CD4-positive, alpha-beta memory T cell (primary cell): ENCODE measurements at regions of chr2 and their contacts with region 1.

Region 1: GRCh38 chr2:218659258-218659987 is at the starts of genes BCS1L and ZNF142:
- DNase-seq: peak; percentile 90 to 94 (median 92)
- H3K4me3 ChIP-seq: peak within 1 kb of the TSS; percentile 50 to 78
- H3K4me3 Mint-ChIP-seq: peak within 1 kb of the TSS; percentile 91 to 100 (median 93)
- H3K27ac ChIP-seq: peak within 1 kb of the TSS; percentile 71
- H3K27ac Mint-ChIP-seq: peak within 1 kb of the TSS; percentile 92 to 98 (median 94)
- H3K4me1 ChIP-seq: peaks cover 28% of the 10 kb centered on the region
- H3K4me1 Mint-ChIP-seq: peaks cover 17 to 37% (median 31%) of the 10 kb centered on the region in 4 donors
- H3K27me3 ChIP-seq: no peaks in the 10 kb centered on the region
- H3K27me3 Mint-ChIP-seq: no peaks in the 10 kb centered on the region
- total RNA-seq, gene BCS1L: 53.0 to 57.2 TPM
- total RNA-seq, gene ZNF142: 44.4 to 54.5 TPM

Region 2: DNA sequence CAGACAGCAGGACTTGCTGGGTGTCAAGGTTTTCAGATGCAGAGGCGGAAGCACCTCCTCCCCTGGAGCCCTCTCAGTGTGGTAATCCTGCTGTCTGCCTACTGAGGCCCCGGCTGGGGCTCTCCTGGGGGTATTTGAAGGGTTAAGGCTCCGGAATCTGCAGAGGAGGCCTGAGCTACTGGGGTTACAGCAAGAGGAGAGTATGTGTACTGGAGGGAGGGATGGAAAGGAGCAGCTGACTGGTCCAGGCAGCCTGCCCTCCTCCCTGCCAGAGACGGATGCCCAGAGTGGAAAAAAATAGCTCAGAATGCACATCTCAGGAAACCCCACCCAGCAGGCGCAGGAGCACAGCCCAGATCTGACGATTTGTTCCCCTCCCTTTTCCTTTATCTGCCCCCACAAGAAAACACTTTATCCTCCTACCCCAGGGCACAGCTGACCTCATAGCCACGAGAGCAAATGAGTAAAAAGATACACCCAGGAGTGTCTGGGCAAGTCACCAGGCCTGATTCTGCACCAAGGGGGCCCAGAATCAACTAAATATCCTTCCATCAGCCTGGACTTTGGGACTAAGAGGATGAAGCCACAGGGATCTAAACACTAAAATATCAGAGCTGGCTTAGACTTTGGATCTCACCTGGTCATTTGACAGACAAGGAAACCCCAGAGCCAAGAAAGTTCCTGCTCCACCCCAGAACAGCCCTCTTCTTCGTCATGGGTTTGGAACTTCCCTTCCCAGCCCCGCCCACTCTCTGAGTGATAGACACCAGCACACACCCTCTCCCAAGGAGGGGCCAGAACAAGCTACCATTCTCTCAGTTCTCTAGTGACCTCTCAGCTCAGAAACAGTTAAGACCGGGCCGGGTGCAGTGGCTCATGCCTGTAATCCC is 372.6 kb before region 1 on chr2:
- CTCF ChIA-PET with region 1: no interaction called
- POLR2A ChIA-PET with region 1: interaction called, 11 read pairs
- intact Hi-C with region 1: no loop called
- DNase-seq: peak; percentile 84 to 97 (median 87)
- H3K4me3 ChIP-seq: peak overlapping the region; percentile 53 to 86
- H3K4me3 Mint-ChIP-seq: peak overlapping the region; percentile 90 to 97 (median 91)
- H3K27ac ChIP-seq: peak overlapping the region; percentile 94
- H3K27ac Mint-ChIP-seq: peak overlapping the region; percentile 98 to 100 (median 99)
- H3K4me1 ChIP-seq: peaks cover 92% of the 10 kb centered on the region
- H3K4me1 Mint-ChIP-seq: peaks cover 55 to 95% (median 73%) of the 10 kb centered on the region in 4 donors
- H3K27me3 ChIP-seq: no peaks in the 10 kb centered on the region
- H3K27me3 Mint-ChIP-seq: no peaks in the 10 kb centered on the region

Region 3: DNA sequence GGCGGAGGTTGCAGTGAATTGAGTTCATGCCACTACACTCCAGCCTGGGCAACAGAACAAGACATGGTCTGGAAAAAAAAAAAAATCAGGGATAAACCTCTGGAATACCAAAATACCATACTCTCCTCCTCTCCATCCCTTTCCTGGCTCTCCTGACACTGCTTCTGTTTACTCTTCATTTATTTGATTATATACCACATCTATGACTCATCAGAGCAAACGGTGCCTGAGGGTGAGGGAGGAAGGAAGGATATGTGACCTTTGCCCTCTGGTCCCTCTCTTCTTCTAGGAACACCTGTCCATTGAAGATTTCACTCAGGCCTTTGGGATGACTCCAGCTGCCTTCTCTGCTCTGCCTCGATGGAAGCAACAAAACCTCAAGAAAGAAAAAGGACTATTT is 210.5 kb before region 1 on chr2:
- CTCF ChIA-PET with region 1: no interaction called
- POLR2A ChIA-PET with region 1: no interaction called
- intact Hi-C with region 1: no loop called
- DNase-seq: no peak
- H3K4me3 ChIP-seq: no peak overlapping the region
- H3K4me3 Mint-ChIP-seq: no peak overlapping the region
- H3K27ac ChIP-seq: no peak overlapping the region
- H3K27ac Mint-ChIP-seq: peak overlapping the region in 1 of 7 donors; percentile 57
- H3K4me1 ChIP-seq: no peaks in the 10 kb centered on the region
- H3K4me1 Mint-ChIP-seq: peaks cover 0 to 3% (median under 1%) of the 10 kb centered on the region in 4 donors
- H3K27me3 ChIP-seq: no peaks in the 10 kb centered on the region
- H3K27me3 Mint-ChIP-seq: no peaks in the 10 kb centered on the region

Region 4: DNA sequence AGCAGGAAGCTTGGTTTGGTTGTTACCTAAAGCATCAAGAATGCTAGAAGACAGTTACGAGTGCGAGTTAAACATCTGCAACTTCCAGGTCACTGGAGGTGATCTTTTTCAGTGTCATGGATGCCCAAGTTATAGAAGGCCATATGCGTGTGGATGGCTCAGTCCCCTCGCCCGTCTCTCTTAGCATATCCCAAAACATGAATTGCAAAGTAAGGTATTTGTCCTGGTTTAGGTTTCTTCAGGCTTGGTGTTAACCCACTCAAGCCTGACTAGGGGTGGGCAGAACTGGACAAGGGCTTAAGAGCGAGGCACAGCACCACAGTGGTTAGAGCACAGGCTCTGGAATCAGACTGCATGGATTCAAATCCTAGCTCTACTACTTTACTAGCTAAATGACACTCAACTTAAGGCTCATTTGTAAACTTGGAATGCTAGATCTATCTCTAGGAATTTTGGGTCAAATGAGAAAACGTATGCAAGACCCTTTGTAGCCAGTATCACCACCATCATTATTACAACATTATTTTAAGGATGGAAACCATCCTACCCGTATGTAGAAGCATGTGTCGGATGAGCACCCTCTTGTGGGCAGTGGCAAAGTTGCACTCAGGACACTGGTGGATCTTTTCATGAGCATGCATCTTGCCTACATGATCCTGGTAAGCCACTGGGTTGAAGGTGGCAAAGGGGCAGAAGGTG is 11.2 kb before region 1 on chr2:
- CTCF ChIA-PET with region 1: interaction called, 49 read pairs
- POLR2A ChIA-PET with region 1: interaction called, 16 read pairs
- intact Hi-C with region 1: loop called (anchors 1 kb)
- DNase-seq: peak in 4 of 5 donors; percentile 42 to 52 (median 48)
- H3K4me3 ChIP-seq: no peak overlapping the region
- H3K4me3 Mint-ChIP-seq: no peak overlapping the region
- H3K27ac ChIP-seq: no peak overlapping the region
- H3K27ac Mint-ChIP-seq: peak overlapping the region in 2 of 7 donors; percentile 54 to 67
- H3K4me1 ChIP-seq: peaks cover 6% of the 10 kb centered on the region
- H3K4me1 Mint-ChIP-seq: peaks cover 6 to 13% (median 11%) of the 10 kb centered on the region in 4 donors
- H3K27me3 ChIP-seq: no peaks in the 10 kb centered on the region
- H3K27me3 Mint-ChIP-seq: no peaks in the 10 kb centered on the region

Region 5: DNA sequence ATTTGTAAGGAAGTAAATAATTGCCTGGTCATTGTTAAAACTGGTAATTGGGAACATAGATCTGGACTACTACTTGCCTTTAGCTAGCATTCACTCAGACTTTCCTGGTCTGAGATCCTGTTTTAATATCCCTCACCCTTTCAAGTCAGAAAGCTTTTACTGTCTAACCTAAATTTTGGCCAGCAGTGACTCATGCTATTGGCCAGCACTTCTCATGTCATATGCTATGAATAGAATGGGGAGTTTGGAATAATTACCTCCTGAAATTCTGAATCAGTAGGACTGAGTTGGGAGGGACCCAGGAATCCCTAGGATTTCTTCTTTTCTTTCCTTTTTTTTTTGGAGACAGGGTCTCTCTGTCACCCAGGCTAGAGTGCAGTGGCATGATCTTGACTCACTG is 31.8 kb after region 1 on chr2:
- CTCF ChIA-PET with region 1: interaction called, 23 read pairs
- POLR2A ChIA-PET with region 1: no interaction called
- intact Hi-C with region 1: loop called (anchors 1 kb)
- DNase-seq: no peak
- H3K4me3 ChIP-seq: no peak overlapping the region
- H3K4me3 Mint-ChIP-seq: no peak overlapping the region
- H3K27ac ChIP-seq: no peak overlapping the region
- H3K27ac Mint-ChIP-seq: no peak overlapping the region
- H3K4me1 ChIP-seq: no peaks in the 10 kb centered on the region
- H3K4me1 Mint-ChIP-seq: peaks cover 0 to 4% (median 2%) of the 10 kb centered on the region in 4 donors
- H3K27me3 ChIP-seq: no peaks in the 10 kb centered on the region
- H3K27me3 Mint-ChIP-seq: no peaks in the 10 kb centered on the region

Region 6: GRCh38 chr2:218898109-218898878 is 238.9 kb after region 1 on chr2:
- CTCF ChIA-PET with region 1: interaction called, 9 read pairs
- POLR2A ChIA-PET with region 1: interaction called, 6 read pairs
- intact Hi-C with region 1: loop called (anchors 5 kb)
- DNase-seq: peak; percentile 70 to 80 (median 71)
- H3K4me3 ChIP-seq: peak overlapping the region in 1 of 2 donors; percentile 64
- H3K4me3 Mint-ChIP-seq: peak overlapping the region; percentile 81 to 97 (median 84)
- H3K27ac ChIP-seq: peak overlapping the region; percentile 93
- H3K27ac Mint-ChIP-seq: peak overlapping the region; percentile 85 to 99 (median 95)
- H3K4me1 ChIP-seq: peaks cover 54% of the 10 kb centered on the region
- H3K4me1 Mint-ChIP-seq: peaks cover 33 to 49% (median 42%) of the 10 kb centered on the region in 4 donors
- H3K27me3 ChIP-seq: no peaks in the 10 kb centered on the region
- H3K27me3 Mint-ChIP-seq: peaks cover 8 to 17% of the 10 kb centered on the region in 2 donors

Region 7: DNA sequence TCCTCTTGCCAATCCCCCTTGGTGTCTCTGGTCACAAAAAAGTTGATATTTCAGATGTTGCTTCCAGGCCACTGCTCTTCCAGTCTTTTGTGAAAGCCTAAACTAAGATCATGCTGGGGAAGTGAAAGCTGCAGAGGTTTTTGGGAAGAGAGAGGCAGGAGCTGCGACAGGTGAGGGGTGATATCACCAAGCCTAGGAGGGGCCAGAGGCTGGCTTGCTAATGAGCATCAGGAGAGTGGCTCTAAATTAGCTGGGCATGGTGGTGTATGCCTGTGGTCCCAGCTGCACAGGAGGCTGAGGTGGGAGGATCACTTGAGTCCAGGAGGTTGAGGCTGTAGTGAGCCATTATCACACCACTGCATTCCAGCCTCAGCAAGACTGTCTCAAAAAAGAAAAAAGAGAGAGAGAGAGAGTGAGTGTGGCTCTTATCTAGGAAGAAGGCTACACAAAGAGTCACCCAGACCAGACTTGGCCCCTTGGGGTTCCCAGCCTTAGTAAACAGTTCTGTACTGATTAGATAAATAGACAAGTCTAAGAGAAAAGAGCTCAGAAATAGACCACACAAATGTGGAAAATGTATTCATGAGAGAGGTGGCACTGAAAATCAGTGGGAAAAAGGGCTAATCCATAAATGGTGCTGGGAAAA is 285.5 kb after region 1 on chr2:
- CTCF ChIA-PET with region 1: no interaction called
- POLR2A ChIA-PET with region 1: no interaction called
- intact Hi-C with region 1: no loop called
- DNase-seq: no peak
- H3K4me3 ChIP-seq: no peak overlapping the region
- H3K4me3 Mint-ChIP-seq: no peak overlapping the region
- H3K27ac ChIP-seq: no peak overlapping the region
- H3K27ac Mint-ChIP-seq: no peak overlapping the region
- H3K4me1 ChIP-seq: no peaks in the 10 kb centered on the region
- H3K4me1 Mint-ChIP-seq: no peaks in the 10 kb centered on the region
- H3K27me3 ChIP-seq: peaks cover 12% of the 10 kb centered on the region
- H3K27me3 Mint-ChIP-seq: peaks cover 36 to 43% of the 10 kb centered on the region in 2 donors